Heart right ventricle (tissue), 16 donors: ENCODE measurements at regions of chr17 and their contacts with region 1.

Region 1: GRCh38 chr17:81034779-81035388 is at the start of gene BAIAP2:
- DNase-seq: peak; percentile 98 to 99
- ATAC-seq: peak; percentile 75 to 88 (median 83)
- H3K4me3 ChIP-seq: peak within 1 kb of the TSS; percentile 44 to 77 (median 66)
- H3K27ac ChIP-seq: peak within 1 kb of the TSS; percentile 10 to 72 (median 63)
- H3K4me1 ChIP-seq: peaks cover 21 to 79% (median 69%) of the 10 kb centered on the region in 9 donors
- H3K27me3 ChIP-seq: peaks cover 0 to 17% (median 0%) of the 10 kb centered on the region in 7 donors
- CTCF ChIP-seq: peak in 3 of 9 donors; percentile 12 to 28 (median 12)
- total RNA-seq, gene BAIAP2: 9.5 to 25.8 (median 13.8) TPM

Region 2: GRCh38 chr17:81083125-81083765 is 48.4 kb after region 1 on chr17:
- intact Hi-C with region 1: loop called in 2 of 10 experiments (anchors 1 to 5 kb)
- DNase-seq: peak in 1 of 2 donors; percentile 54
- ATAC-seq: peak; percentile 10 to 72 (median 53)
- H3K4me3 ChIP-seq: peak overlapping the region in 1 of 10 donors; percentile 0
- H3K27ac ChIP-seq: peak overlapping the region in 9 of 10 donors; percentile 57 to 87 (median 73)
- H3K4me1 ChIP-seq: peaks cover 10 to 43% (median 33%) of the 10 kb centered on the region in 9 donors
- H3K27me3 ChIP-seq: no peaks in the 10 kb centered on the region
- CTCF ChIP-seq: no peak

Region 3: DNA sequence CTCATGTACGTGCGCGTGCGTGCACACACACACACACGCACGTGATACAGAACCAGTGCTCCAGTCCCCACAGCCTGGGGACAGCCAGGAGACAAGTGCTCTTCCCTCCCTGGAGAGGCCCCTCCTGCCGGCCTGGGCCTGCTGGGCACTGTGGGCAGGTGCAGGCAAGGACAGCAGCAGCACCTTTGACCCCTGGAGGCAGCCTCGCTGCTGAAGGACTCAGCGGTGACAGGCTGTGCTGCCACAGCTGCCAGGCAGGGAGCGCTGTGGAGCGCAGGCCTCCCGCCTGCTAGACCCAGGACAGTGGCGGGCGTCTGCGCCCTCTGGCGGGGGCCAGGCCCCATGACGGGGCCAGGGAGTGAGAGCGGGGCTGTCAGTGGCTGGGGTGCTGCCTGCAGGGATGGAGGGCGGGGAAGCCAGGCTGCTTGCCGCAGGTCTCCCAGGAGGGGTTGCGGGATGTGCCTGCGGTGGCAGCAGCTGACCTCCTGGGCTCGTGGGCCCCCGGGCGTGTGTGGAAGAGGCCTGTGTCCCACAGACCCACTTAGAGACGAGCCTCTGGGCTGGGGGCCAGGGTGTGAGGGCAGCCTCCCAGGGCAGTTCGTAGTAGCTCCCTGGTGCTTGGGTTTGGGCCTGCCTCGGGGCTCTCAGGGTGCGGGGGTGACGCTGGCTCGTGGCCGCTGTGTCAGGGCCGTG is 66.9 kb after region 1 on chr17:
- intact Hi-C with region 1: loop called in 1 of 10 experiments (anchors 2 kb)
- DNase-seq: peak; percentile 73 to 84
- ATAC-seq: peak; percentile 72 to 90 (median 85)
- H3K4me3 ChIP-seq: no peak overlapping the region
- H3K27ac ChIP-seq: no peak overlapping the region
- H3K4me1 ChIP-seq: peaks cover 0 to 25% (median 18%) of the 10 kb centered on the region in 9 donors
- H3K27me3 ChIP-seq: no peaks in the 10 kb centered on the region
- CTCF ChIP-seq: peak; percentile 99 to 100 (median 100)

Region 4: DNA sequence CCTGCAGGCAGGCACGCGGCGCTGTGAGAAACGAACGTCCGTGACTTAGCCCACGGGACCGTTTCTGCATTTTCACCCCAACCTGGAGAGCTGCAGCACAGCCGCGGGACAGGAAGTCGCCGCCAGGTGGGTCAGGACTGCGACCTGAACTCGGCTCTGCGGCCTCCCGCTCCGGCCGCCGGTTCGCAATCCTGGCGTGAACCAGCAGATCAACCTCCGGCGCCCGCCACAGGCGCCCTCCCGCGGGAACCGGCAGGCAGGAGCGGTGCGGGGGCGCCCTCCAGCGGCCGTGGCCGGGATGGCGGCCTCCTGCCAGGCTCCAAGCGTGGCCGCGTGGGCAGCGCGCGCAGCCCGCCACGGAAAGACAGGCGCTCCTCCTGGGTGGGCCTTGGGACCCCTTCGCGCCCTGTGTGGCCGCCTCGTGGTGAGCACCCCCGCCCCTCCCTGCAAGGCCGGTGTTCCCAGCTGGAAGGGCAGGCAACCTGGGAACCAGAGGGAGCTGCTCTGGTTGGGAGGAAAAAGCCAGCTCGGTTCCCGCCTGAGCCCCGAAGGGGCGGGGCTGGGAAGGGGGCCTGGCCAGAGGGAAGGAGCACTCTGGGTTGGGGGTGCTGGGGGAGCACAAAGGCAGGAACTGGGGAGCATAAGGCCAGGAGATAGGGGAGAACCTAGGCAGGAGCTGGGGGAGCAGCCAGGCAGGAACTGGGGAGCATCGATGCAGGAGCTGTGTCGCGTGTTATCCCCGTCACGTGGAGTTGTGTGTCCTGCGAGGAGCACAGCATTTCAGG is 449.5 kb after region 1 on chr17:
- intact Hi-C with region 1: no loop called
- DNase-seq: peak; percentile 88 to 90
- ATAC-seq: peak; percentile 48 to 76 (median 64)
- H3K4me3 ChIP-seq: peak overlapping the region in 9 of 10 donors; percentile 33 to 59 (median 54)
- H3K27ac ChIP-seq: peak overlapping the region in 5 of 10 donors; percentile 38 to 59 (median 52)
- H3K4me1 ChIP-seq: peaks cover 23 to 78% (median 61%) of the 10 kb centered on the region in 9 donors
- H3K27me3 ChIP-seq: peaks cover 0 to 40% (median 0%) of the 10 kb centered on the region in 7 donors
- CTCF ChIP-seq: peak in 8 of 9 donors; percentile 95 to 100 (median 99)